ENCODE measurements at regions of chr7 and their contacts with region 1.

Region 1: DNA sequence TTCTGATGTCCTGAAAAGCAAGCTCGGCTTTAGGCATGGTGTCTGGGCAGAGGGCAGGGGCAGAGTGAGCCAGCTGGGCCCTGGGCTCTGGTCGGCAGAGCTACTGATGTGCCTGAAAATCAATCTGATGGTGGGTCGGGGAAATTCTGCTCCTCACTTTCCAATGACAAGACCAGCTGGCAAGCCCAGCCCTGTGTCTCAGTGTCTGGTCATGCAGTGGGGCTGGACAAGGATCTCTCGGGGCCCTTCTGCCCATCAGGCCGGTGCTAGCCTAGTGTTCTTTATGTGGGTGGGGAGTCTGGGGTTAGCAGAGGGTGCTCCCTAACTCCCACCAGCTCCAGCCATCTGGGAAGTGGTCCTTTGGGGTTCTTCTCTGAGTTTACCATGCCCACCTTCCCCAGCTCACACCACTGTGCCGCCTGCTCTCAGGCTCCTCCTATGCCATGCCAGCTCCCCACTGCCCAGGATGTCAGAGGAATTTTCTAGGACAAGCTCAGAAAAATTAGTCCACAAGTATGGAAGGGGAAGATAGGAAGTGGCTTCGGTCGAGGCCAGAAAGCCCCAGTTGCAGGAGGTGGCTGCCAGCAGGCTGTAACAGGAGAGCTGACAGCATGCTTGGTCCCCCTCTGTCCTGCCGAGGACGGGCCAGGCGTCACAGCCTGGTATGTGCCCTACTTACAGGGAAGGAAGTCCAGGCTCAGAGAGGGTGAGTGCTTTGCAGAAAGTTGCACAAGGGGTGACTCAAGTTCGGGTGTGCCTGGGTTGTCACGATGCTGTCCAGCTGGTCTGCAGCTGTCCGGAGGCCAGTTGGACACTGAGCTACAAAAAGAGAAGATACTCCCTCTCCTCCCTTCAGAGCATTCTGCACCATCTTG is 135.2 kb downstream of the ADCY1 start:
- DNase-seq: no peak
- ATAC-seq: no peak
- H3K4me3 ChIP-seq: no peak overlapping the region
- H3K27ac ChIP-seq: no peak overlapping the region
- H3K4me1 ChIP-seq: no peaks in the 10 kb centered on the region
- H3K27me3 ChIP-seq: peaks cover 36% of the 10 kb centered on the region
- CTCF ChIP-seq: no peak
- POLR2A ChIP-seq: no peak
- RAD21 ChIP-seq: no peak

Region 2: GRCh38 chr7:45434167-45434784 is 275.1 kb before region 1 on chr7:
- CTCF ChIA-PET with region 1: no interaction called
- POLR2A ChIA-PET with region 1: no interaction called
- RAD21 ChIA-PET with region 1: no interaction called
- intact Hi-C with region 1: loop called (anchors 5 kb)
- DNase-seq: no peak
- ATAC-seq: no peak
- H3K4me3 ChIP-seq: no peak overlapping the region
- H3K27ac ChIP-seq: no peak overlapping the region
- H3K4me1 ChIP-seq: no peaks in the 10 kb centered on the region
- H3K27me3 ChIP-seq: peaks cover 61% of the 10 kb centered on the region
- CTCF ChIP-seq: no peak
- POLR2A ChIP-seq: no peak
- RAD21 ChIP-seq: no peak

Region 3: DNA sequence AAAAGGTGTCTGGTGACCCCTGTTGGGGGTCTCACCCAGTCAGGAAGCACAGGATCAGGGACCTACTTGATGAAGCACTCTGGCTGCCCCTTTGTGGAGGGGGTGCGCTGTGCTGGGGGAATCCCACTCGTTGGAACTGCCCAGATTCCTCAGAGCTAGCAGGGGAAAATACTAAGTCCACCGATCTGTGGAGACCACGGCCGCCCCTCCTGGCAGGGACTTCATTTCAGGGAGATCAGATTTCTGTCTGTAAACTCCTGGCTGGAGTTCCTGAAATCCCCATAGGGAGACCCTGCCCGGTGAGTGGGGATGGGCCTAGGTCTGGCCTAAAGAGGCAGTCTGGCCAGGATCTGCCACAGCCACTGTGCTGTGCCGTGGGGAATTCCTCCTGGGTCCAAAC is 214.5 kb before region 1 on chr7:
- CTCF ChIA-PET with region 1: no interaction called
- POLR2A ChIA-PET with region 1: no interaction called
- RAD21 ChIA-PET with region 1: no interaction called
- intact Hi-C with region 1: no loop called
- DNase-seq: no peak
- ATAC-seq: no peak
- H3K4me3 ChIP-seq: no peak overlapping the region
- H3K27ac ChIP-seq: no peak overlapping the region
- H3K4me1 ChIP-seq: no peaks in the 10 kb centered on the region
- H3K27me3 ChIP-seq: peaks cover 24% of the 10 kb centered on the region
- CTCF ChIP-seq: no peak
- POLR2A ChIP-seq: no peak
- RAD21 ChIP-seq: no peak